ENCODE measurements at regions of chr12 and their contacts with region 1.

Region 1: DNA sequence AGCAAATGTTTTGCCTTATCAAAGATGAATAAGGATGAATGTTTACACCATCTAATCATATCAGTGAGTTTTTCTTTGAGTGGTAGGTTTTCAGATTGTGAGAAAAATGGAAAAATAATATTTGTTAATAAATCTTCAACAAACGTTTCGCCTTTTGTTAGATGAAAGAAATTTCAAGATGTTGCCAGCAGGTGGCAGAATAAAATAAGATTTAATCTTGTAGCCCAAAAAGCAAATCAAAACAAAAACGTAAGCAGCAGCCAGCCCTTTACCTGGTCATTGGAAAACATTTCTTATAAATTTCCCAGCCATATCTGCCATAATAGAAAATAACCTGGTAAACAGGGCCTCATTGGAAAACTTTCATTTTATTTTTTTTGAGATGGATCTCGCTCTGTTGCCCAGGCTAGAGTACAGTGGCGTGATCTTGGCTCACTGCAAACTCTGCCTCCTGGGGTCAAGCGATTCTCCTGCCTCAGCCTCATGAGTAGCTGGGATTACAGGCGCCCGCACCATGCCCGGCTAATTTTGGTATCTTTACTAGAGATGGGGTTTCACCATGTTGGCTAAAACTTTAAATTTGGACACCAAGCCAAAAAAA is 15.4 kb upstream of the TMEM120B start:
- DNase-seq: no peak
- H3K4me3 ChIP-seq: peak overlapping the region in 2 of 4 donors; percentile 15 to 18
- H3K27ac ChIP-seq: no peak overlapping the region
- H3K4me1 ChIP-seq: peaks cover 3 to 19% (median 15%) of the 10 kb centered on the region in 4 donors
- H3K27me3 ChIP-seq: no peaks in the 10 kb centered on the region
- CTCF ChIP-seq: peak; percentile 62 to 84 (median 67)
- EP300 ChIP-seq: no peak
- POLR2A ChIP-seq: no peak

Region 2: GRCh38 chr12:121773011-121773777 is 76.0 kb after region 1 on chr12:
- intact Hi-C with region 1: loop called (anchors 1 kb)
- DNase-seq: no peak
- H3K4me3 ChIP-seq: peak overlapping the region in 2 of 4 donors; percentile 17 to 31
- H3K27ac ChIP-seq: peak overlapping the region; percentile 70 to 75 (median 71)
- H3K4me1 ChIP-seq: peaks cover 41 to 64% (median 46%) of the 10 kb centered on the region in 4 donors
- H3K27me3 ChIP-seq: no peaks in the 10 kb centered on the region
- CTCF ChIP-seq: peak; percentile 84 to 91 (median 89)
- EP300 ChIP-seq: no peak
- POLR2A ChIP-seq: no peak

Region 3: DNA sequence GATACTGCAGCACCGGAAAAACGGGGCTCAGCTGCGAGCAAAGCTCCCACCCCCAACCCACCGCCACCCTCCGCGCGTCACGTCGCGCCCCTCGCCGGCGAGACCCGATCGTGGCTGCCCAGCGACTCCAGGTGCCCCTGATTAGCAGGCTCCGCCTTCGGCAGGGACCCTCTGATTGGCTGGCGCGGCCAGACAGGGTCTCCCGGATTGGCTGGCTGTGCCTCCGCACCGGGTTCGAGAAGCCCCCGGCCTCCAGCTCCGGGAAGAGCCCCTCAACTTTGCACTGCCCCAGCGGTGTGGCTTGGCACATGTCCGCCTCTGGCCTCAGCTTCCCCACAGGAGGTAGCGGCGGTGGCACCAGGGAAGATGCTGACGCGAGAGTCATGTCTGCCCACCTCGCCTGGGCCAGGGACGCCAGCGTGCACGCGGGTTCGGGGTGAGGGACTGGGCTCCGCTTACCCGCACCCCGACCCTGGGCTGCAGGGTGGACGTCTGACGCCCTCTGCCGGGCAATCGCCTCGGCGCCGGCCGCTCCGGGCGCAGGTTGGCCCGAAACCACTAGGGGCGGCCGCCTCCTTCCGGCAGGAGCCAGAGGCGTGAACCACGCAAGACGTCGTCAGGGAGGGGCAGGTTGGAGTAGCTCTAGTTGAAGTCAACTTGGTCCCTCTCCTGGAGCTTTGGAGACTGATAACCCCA is 96.8 kb after region 1 on chr12:
- intact Hi-C with region 1: loop called (anchors 2 kb)
- DNase-seq: peak; percentile 96
- H3K4me3 ChIP-seq: peak overlapping the region; percentile 59 to 64 (median 60)
- H3K27ac ChIP-seq: peak overlapping the region; percentile 97 to 100 (median 100)
- H3K4me1 ChIP-seq: peaks cover 66 to 77% (median 76%) of the 10 kb centered on the region in 4 donors
- H3K27me3 ChIP-seq: no peaks in the 10 kb centered on the region
- CTCF ChIP-seq: peak; percentile 99 to 100 (median 100)
- EP300 ChIP-seq: no peak
- POLR2A ChIP-seq: peak; percentile 15